ENCODE measurements at regions of chr3 and their contacts with region 1.

Region 1: GRCh38 chr3:177236704-177237103 is 39.4 kb upstream of the TBL1XR1 start:
- DNase-seq: no peak

Region 2: DNA sequence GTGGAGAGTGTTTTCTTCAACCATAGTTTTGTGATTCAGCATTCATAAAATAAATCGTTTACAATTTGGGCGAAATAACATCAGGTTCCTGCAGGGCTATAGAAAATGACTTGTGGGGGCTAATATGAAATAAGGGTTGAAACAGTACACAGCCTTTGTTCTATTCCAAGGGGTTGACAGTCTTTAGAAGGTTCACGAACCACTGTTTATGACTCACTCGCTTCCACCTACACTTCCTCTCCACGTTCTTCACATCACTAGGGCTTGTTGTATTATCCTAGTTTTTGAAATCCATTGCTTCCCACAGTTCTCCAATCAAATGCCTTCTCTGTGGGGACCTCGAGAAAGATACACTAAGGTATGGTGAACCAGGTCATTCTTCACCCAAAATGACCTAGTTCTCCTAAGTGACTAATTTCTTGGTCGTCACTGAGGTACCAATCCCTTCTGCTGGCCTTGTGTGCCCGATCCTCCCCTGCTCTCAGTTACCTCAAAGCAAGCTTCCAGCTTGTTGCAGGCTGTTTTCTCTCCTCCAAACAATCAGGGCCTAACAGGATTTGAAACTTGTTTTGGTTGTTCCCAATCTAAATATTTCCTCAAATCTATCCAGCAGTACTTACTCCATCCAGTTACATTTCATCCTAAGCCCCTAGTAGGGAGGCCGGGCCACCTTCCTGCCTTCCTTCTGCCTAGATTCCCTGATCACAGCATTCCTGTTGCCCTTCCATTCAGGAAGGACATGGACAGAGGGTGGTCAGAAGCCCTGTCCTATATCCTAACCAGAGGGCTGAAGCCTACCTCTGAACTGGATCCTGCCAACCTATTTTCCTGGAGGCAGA is 16.3 kb before region 1 on chr3:
- CTCF ChIA-PET with region 1: interaction called, 11 read pairs
- POLR2A ChIA-PET with region 1: no interaction called
- DNase-seq: no peak

Region 3: GRCh38 chr3:177251755-177252154 is 15.1 kb after region 1 on chr3:
- CTCF ChIA-PET with region 1: no interaction called
- POLR2A ChIA-PET with region 1: no interaction called
- DNase-seq: no peak

Measured in HEK293T (cell line).